Posterior cingulate gyrus (tissue), 11 donors: ENCODE measurements at regions of chr12 and their contacts with region 1.

Region 1: DNA sequence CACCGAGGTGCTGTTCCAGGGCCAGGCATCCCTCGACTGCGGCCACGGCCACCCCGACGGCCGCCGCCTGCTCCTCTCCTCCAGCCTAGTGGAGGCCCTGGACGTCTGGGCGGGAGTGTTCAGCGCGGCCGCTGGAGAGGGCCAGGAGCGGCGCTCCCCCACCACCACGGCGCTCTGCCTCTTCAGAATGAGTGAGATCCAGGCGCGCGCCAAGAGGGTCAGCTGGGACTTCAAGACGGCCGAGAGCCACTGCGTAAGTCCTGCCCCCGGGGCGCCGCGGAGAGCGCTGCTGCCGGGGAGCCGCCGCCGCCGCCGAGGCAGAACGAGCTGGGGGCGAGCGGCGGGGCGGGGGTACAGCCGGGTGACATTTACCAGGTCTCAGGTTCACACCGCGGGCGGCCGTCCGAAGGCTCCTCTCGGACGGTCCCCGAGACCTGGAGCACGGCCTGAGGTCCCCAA is 1.4 kb downstream of the PLXNC1 start:
- DNase-seq: peak in 9 of 10 donors; percentile 12 to 90 (median 45)

Region 2: DNA sequence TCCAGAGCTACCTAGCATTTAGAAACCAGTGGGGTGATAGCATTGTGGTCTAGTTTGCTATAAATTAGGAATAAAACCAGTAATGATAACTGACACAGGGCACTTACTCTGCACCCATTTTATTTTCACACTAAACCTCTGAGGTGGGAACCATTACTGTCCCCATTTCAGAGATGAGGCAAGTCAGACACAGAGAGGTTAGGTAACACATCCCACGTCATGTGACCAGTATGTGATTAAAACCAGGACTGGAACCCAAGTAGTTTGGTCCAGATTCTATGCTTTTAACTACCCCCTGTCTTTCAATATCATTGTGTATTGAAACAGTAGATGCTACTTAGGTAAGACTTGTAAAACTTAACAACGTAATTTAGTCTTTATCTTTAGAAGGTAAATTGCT is 108.8 kb after region 1 on chr12:
- intact Hi-C with region 1: loop called (anchors 10 kb)
- DNase-seq: no peak

Region 3: GRCh38 chr12:94435511-94435927 is 285.7 kb after region 1 on chr12:
- intact Hi-C with region 1: loop called (anchors 2 kb)
- DNase-seq: no peak

Region 4: GRCh38 chr12:94532490-94533422 is 382.9 kb after region 1 on chr12:
- intact Hi-C with region 1: loop called (anchors 1 kb)
- DNase-seq: peak; percentile 39 to 96 (median 78)